Transverse colon (tissue), 4 donors: ENCODE measurements at regions of chr6 and their contacts with region 1.

Region 1: DNA sequence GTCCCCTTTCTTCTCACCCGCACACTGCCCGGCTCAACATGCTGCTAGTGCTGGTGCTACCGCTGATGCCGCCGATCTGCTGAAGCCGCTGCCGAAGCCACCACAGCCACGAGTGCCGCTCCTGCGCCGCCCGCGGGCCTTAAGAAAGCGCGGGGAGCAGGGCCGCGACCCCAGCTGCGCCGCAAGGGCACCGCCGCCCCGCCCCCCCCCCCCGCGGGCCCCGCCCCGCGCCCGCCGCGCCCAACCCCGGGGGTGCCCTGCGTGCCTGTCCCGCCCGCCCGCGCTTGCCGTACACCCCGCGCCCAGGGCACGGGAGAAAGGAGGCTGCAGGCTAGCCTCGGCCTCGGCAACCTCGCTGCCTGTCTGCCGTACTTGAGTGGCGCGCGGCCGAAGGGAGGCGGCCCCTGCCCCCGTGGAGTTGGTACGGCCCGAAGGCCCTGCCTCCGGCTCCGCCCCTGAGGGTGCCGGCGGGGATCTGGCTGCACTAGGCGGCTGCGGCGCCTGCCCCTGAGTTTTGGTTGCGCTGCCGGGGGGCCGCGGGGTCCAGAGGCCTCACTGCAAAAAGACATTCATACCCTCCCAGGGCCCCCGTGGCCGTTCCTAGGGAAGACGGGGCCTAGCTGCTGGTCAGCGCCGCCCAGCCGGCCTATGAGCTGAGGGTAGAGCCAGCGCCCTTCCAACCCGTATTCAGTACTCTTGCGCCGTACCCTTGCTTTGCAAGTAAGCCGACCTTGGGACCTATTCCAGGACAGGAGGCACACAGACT is at the start of gene SOD2:
- DNase-seq: peak; percentile 90
- H3K4me3 ChIP-seq: peak within 1 kb of the TSS; percentile 40 to 96 (median 74)
- H3K27ac ChIP-seq: peak within 1 kb of the TSS; percentile 93 to 100 (median 95)
- H3K4me1 ChIP-seq: peaks cover 7 to 58% (median 40%) of the 10 kb centered on the region in 4 donors
- H3K27me3 ChIP-seq: no peaks in the 10 kb centered on the region
- CTCF ChIP-seq: no peak
- EP300 ChIP-seq: no peak
- POLR2A ChIP-seq: peak; percentile 93
- total RNA-seq, gene SOD2: 170 to 272 (median 224) TPM

Region 2: GRCh38 chr6:159726918-159727716 is 33.8 kb after region 1 on chr6 and contains the start of gene WTAP:
- in situ Hi-C with region 1: no loop called
- intact Hi-C with region 1: loop called (anchors 5 kb)
- DNase-seq: peak; percentile 98
- H3K4me3 ChIP-seq: peak within 1 kb of the TSS; percentile 80 to 98 (median 91)
- H3K27ac ChIP-seq: peak within 1 kb of the TSS; percentile 96 to 100 (median 99)
- H3K4me1 ChIP-seq: peaks cover 15 to 48% (median 27%) of the 10 kb centered on the region in 4 donors
- H3K27me3 ChIP-seq: no peaks in the 10 kb centered on the region
- CTCF ChIP-seq: no peak
- EP300 ChIP-seq: no peak
- POLR2A ChIP-seq: peak; percentile 93
- total RNA-seq, gene WTAP: 32.6 to 119 (median 88.1) TPM

Region 3: DNA sequence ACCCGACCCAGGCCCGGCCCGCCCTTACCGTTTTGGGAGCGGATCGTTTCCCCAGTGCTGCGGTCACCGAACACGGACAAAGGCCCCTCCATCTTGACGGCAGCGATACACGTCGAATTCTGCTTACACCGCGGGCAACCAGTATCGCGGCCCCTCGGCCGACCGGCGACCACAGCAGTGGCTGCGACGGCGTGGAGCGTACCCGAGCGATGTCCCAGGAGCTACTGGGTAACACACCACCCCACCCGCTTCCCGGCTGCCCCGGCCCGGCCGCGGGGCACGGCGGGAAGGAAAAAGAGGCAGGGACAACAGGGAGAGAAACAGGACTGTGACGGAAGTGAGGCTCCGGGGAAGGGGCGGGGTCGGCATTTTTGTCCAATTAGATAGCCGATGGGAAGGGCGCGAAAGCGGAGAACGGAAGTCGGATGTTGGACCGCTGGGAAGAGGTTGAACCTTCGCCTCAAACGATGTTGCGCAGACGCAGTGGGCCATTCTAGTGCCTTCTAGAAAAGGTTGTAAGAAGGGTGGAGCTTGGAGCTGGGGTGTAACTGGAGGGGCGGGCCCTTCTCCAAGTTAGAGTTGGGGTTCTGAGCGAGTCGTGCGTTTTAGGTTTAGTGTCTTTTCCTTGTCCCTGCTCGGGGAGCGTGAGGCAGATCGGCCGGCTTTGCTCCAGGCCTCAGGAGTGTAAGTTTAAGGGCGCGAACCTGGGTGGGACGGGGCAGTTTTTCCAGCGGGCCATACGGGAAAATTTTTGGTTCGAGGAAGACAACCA is 96.3 kb after region 1 on chr6 and contains the start of gene TCP1:
- in situ Hi-C with region 1: loop called in 2 of 4 experiments (anchors 25 kb)
- intact Hi-C with region 1: loop called (anchors 2 kb)
- DNase-seq: peak; percentile 100
- H3K4me3 ChIP-seq: peak within 1 kb of the TSS; percentile 80 to 98 (median 82)
- H3K27ac ChIP-seq: peak within 1 kb of the TSS; percentile 92 to 100 (median 99)
- H3K4me1 ChIP-seq: peaks cover 27 to 50% (median 38%) of the 10 kb centered on the region in 4 donors
- H3K27me3 ChIP-seq: no peaks in the 10 kb centered on the region
- CTCF ChIP-seq: no peak
- EP300 ChIP-seq: no peak
- POLR2A ChIP-seq: peak; percentile 98
- total RNA-seq, gene TCP1: 43.8 to 170 (median 112) TPM

Region 4: DNA sequence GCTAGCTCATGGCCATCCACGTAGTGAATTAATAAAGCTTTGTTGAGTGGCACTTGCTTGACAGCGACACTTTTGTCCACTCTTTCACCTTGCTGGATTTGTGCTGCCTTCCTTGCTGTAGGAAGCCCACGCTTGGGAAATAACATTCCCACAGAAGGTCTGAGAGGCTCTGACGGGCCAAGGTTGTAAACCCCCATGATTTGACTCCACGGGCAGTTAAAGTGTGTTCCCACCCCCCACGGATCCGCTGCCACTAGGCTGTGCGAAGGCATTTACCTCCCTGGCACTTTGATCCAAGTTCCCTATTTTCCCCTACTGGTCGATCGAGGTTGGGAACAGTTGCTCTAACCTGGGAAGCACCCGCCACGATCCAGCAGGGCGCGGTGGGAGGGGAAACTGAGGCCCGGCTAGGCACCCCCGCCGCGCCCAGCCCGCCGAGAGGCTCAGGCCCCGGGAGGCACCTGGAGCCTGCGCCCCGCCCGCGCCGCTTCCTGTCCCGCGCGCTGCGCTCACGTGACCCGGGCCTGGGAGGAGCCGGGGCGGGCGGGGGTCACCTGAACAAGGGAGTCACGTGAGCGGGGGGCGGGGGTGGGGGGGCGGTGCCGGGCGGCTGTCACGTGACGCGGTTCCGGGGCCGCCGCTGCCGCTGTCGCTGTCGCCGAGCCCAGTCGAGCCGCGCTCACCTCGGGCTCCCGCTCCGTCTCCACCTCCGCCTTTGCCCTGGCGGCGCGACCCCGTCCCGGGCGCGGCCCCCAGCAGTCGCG is 275.3 kb after region 1 on chr6 and contains the start of gene IGF2R:
- in situ Hi-C with region 1: loop called in 1 of 4 experiments (anchors 25 kb)
- intact Hi-C with region 1: no loop called
- DNase-seq: peak; percentile 96
- H3K4me3 ChIP-seq: peak within 1 kb of the TSS; percentile 78 to 98 (median 92)
- H3K27ac ChIP-seq: peak within 1 kb of the TSS; percentile 92 to 97 (median 94)
- H3K4me1 ChIP-seq: peaks cover 4 to 43% (median 18%) of the 10 kb centered on the region in 4 donors
- H3K27me3 ChIP-seq: no peaks in the 10 kb centered on the region
- CTCF ChIP-seq: peak in 2 of 5 experiments; percentile 28 to 48
- EP300 ChIP-seq: no peak
- POLR2A ChIP-seq: peak; percentile 90
- total RNA-seq, gene IGF2R: 48.8 to 106 (median 92.3) TPM

Region 5: DNA sequence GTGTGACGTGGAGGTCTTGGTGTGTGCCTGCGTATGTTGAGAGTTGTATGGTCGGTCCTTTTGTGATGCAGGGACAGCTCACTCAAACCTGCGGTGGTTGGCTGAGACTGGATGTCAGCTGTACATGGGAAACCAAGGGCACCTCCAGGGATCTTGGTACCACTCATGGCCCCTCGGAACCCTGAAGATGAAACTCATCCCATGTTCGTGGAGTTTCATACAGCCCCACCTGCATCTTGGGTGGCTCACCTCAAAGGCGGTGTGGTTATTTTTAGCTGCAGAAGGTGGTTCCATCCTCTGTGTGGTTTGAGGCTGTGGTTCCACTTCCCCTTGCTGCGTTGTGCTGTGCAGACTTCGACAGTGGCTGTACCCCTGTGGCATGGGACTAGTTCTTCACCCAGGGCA is 375.7 kb after region 1 on chr6:
- in situ Hi-C with region 1: loop called in 1 of 4 experiments (anchors 25 kb)
- intact Hi-C with region 1: no loop called
- DNase-seq: peak; percentile 44
- H3K4me3 ChIP-seq: no peak overlapping the region
- H3K27ac ChIP-seq: no peak overlapping the region
- H3K4me1 ChIP-seq: no peaks in the 10 kb centered on the region
- H3K27me3 ChIP-seq: no peaks in the 10 kb centered on the region
- CTCF ChIP-seq: no peak
- EP300 ChIP-seq: no peak
- POLR2A ChIP-seq: no peak